Activated T-helper 2 cell treated with anti-CD3 and anti-CD28 coated beads, Interferon-gamma antibody, Interleukin-2, Interleukin-4, amounts not matched to agents 10 μg/mL and 5 μg/mL and 100 μg/mL, durations not matched to agents 14 hours and 24 hours and 36 hours (primary cell): ENCODE measurements at regions of chrX and their contacts with region 1.

Region 1: DNA sequence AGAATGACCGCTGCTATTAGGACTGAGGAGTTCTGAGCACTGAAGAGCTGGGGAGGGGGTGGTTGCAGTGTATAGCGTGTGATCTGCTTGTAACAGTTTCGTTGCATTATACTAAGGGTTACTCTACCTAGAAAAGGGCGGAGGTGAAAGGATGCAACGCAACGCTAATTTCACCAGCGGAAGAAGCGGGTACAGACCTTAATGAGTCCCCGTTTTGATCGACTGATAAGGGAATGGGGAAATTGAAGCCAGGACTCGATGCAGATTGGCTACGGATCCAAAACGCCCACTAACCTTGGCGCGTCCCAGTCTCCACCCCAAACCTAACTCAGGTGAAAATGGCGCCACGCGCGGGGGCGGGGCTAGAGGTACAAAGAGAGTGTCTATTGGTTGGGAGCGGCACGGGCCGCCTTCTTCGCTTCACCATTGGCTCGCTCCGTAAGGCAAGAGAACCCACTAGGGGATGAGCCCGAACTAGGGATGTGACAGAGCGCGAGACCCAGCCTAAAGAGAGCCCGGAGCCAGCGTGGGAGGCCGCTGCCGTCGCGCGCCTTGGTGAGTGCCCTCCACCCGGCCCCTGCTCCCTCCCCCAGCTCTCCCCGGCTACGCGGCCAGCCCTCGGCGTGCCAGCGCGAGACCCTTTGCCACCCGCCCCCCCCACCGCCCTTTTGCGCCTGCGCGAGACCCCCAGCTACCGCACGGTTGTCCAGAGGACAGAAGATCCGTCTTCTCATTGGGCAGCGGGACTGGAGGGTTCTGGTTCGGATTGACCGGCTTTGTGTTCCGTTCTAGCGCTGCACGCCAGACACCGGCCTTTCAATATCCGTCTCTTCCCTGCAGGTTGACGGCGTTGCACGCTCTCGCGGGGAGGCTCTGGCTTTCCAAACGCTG is at the start of gene EBP:
- DNase-seq: peak; percentile 93
- H3K4me3 Mint-ChIP-seq: peak within 1 kb of the TSS; percentile 89
- H3K27ac Mint-ChIP-seq: peak within 1 kb of the TSS; percentile 98
- H3K4me1 Mint-ChIP-seq: peaks cover 23% of the 10 kb centered on the region
- H3K27me3 Mint-ChIP-seq: no peaks in the 10 kb centered on the region
- total RNA-seq, gene EBP: 209 and 212 TPM in 2 replicates

Region 2: GRCh38 chrX:48475774-48476577 is 45.6 kb before region 1 on chrX and contains the start of gene FTSJ1:
- intact Hi-C with region 1: loop called (anchors 5 kb)
- DNase-seq: peak; percentile 88
- H3K4me3 Mint-ChIP-seq: peak within 1 kb of the TSS; percentile 98
- H3K27ac Mint-ChIP-seq: peak within 1 kb of the TSS; percentile 95
- H3K4me1 Mint-ChIP-seq: peaks cover 32% of the 10 kb centered on the region
- H3K27me3 Mint-ChIP-seq: no peaks in the 10 kb centered on the region
- total RNA-seq, gene FTSJ1: 84.6 and 89.8 TPM in 2 replicates

Region 3: GRCh38 chrX:48508400-48509244 is 13.0 kb before region 1 on chrX and contains the start of gene PORCN:
- intact Hi-C with region 1: loop called (anchors 1 kb)
- DNase-seq: peak; percentile 71
- H3K4me3 Mint-ChIP-seq: peak within 1 kb of the TSS; percentile 93
- H3K27ac Mint-ChIP-seq: peak within 1 kb of the TSS; percentile 87
- H3K4me1 Mint-ChIP-seq: peaks cover 22% of the 10 kb centered on the region
- H3K27me3 Mint-ChIP-seq: no peaks in the 10 kb centered on the region
- total RNA-seq, gene PORCN: 16.5 and 17.7 TPM in 2 replicates

Region 4: GRCh38 chrX:48539345-48540027 is 17.9 kb after region 1 on chrX and contains the start of gene TBC1D25:
- intact Hi-C with region 1: loop called (anchors 1 kb)
- DNase-seq: peak; percentile 95
- H3K4me3 Mint-ChIP-seq: peak within 1 kb of the TSS; percentile 89
- H3K27ac Mint-ChIP-seq: peak within 1 kb of the TSS; percentile 94
- H3K4me1 Mint-ChIP-seq: peaks cover 17% of the 10 kb centered on the region
- H3K27me3 Mint-ChIP-seq: no peaks in the 10 kb centered on the region
- total RNA-seq, gene TBC1D25: 16.0 and 18.3 TPM in 2 replicates

Region 5: DNA sequence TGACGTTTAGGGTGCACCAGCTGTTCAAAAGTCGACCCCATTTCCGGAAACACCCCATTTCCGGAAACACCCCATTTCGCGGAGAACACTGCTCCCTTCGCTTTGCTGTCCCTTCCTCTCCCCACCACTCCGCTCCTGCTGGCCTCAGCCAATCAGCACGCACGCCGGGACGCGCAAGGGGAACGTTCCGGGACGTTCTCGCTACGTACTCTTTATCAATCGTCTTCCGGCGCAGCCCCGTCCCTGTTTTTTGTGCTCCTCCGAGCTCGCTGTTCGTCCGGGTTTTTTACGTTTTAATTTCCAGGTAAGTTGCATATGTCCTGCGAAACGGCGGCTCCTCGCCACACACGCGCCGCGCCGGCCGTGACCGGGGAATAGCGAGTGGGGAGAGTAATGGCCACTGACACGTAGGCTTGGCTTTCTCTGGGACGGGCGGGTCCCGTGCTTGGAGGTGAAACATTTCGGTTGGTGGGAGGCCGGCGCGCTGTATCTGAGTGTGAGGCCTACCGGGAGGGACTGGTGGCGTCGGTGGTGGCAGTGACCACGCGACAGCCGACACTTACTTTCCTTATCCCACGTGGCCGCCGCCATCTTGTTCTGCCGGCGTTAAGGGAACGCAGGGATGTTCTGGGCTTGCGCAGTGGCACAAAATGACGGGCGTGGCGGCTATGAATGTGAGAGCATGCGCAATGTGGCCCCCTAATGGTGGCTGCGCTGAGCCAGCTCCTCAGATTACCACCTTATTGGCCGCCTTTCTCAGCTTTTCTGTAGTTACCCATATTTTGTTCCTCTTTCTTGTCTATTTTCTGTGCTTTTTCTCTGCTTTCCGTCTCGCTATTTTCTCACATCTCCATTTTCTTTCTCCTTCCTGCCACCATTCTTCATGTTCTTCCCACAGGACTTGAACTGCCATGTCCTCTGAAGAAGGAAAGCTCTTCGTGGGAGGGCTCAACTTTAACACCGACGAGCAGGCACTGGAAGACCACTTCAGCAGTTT is 53.0 kb after region 1 on chrX and contains the start of gene RBM3:
- intact Hi-C with region 1: loop called (anchors 5 kb)
- DNase-seq: peak; percentile 89
- H3K4me3 Mint-ChIP-seq: peak within 1 kb of the TSS; percentile 99
- H3K27ac Mint-ChIP-seq: peak within 1 kb of the TSS; percentile 100
- H3K4me1 Mint-ChIP-seq: peaks cover 17% of the 10 kb centered on the region
- H3K27me3 Mint-ChIP-seq: no peaks in the 10 kb centered on the region
- total RNA-seq, gene RBM3: 345 and 346 TPM in 2 replicates

Region 6: GRCh38 chrX:48597353-48598264 is 76.0 kb after region 1 on chrX and contains the start of gene WDR13:
- intact Hi-C with region 1: loop called (anchors 5 kb)
- DNase-seq: peak; percentile 86
- H3K4me3 Mint-ChIP-seq: peak within 1 kb of the TSS; percentile 94
- H3K27ac Mint-ChIP-seq: peak within 1 kb of the TSS; percentile 99
- H3K4me1 Mint-ChIP-seq: peaks cover 6% of the 10 kb centered on the region
- H3K27me3 Mint-ChIP-seq: no peaks in the 10 kb centered on the region
- total RNA-seq, gene WDR13: 43.4 and 44.7 TPM in 2 replicates